Naive thymus-derived CD4-positive, alpha-beta T cell (primary cell): ENCODE measurements at regions of chr9 and their contacts with region 1.

Region 1: GRCh38 chr9:120842690-120843499 is at the start of gene PSMD5:
- DNase-seq: peak; percentile 86 to 98 (median 95)
- ATAC-seq: peak; percentile 94
- H3K4me3 ChIP-seq: peak within 1 kb of the TSS; percentile 89
- H3K4me3 Mint-ChIP-seq: peak within 1 kb of the TSS; percentile 91 to 99 (median 96)
- H3K27ac ChIP-seq: peak within 1 kb of the TSS; percentile 98
- H3K27ac Mint-ChIP-seq: peak within 1 kb of the TSS; percentile 83 to 99 (median 96)
- H3K4me1 ChIP-seq: peaks cover 34 to 50% of the 10 kb centered on the region in 2 donors
- H3K4me1 Mint-ChIP-seq: peaks cover 53 to 86% (median 79%) of the 10 kb centered on the region in 7 donors
- H3K27me3 ChIP-seq: no peaks in the 10 kb centered on the region
- H3K27me3 Mint-ChIP-seq: no peaks in the 10 kb centered on the region
- total RNA-seq, gene PSMD5: 33.5 to 63.9 (median 44.0) TPM

Region 2: GRCh38 chr9:120579750-120580590 is 262.9 kb before region 1 on chr9 and contains the start of gene CDK5RAP2:
- CTCF ChIA-PET with region 1: no interaction called
- POLR2A ChIA-PET with region 1: no interaction called
- intact Hi-C with region 1: loop called in 1 of 2 experiments (anchors 1 kb)
- DNase-seq: peak; percentile 77 to 94 (median 92)
- ATAC-seq: peak; percentile 99
- H3K4me3 ChIP-seq: peak within 1 kb of the TSS; percentile 85
- H3K4me3 Mint-ChIP-seq: peak within 1 kb of the TSS; percentile 86 to 98 (median 94)
- H3K27ac ChIP-seq: peak within 1 kb of the TSS; percentile 81
- H3K27ac Mint-ChIP-seq: peak within 1 kb of the TSS; percentile 88 to 95 (median 91)
- H3K4me1 ChIP-seq: peaks cover 15 to 17% of the 10 kb centered on the region in 2 donors
- H3K4me1 Mint-ChIP-seq: peaks cover 29 to 68% (median 62%) of the 10 kb centered on the region in 7 donors
- H3K27me3 ChIP-seq: no peaks in the 10 kb centered on the region
- H3K27me3 Mint-ChIP-seq: peaks cover 0 to 3% (median 0%) of the 10 kb centered on the region in 5 donors
- total RNA-seq, gene CDK5RAP2: 62.2 to 98.1 (median 78.1) TPM

Region 3: DNA sequence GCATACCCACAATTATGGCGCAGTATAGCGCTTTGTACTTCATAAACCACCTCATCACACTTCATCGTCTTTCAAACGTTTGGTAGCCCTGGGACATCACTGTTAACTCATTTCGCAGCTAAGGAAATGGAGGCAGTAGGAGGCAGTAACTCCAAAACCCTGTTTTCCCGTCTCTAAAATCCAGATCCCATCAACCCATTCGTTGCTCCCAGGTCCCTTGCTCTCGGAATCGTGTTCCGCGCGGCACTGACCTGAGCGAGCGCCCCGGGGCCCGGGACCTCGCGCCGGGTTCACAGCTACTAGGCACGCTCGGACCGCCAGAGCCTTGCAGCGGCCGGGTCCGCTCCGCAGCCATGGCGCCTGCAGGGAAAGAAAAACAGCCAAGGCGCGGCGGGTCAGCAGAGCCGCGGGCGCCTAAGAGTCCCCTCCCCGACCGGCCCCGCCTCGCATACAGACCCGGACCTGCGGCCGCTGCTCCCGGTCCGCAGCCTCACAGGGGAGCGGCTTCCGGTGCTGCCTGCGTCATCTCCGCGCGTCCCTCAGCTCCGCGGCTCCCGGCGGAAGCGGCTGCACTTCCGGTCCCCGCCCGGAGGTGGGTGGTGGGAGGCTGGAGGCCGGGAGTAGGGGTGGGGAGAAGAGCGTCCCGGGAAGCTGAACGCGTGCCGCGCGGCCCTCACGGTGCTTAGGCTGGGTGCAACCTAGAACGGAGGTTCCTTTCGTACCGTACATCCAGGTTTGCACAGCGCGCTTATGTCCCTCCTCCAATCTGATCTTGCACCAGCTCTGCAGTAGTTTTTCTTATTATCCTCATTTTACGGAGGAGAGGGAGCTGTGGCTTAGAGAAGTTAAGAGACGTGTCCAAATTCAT is 49.8 kb before region 1 on chr9 and contains the start of gene FBXW2:
- CTCF ChIA-PET with region 1: no interaction called
- POLR2A ChIA-PET with region 1: interaction called, 15 read pairs
- intact Hi-C with region 1: loop called (anchors 1 kb)
- DNase-seq: peak; percentile 65 to 96 (median 78)
- ATAC-seq: peak; percentile 91
- H3K4me3 ChIP-seq: peak within 1 kb of the TSS; percentile 66
- H3K4me3 Mint-ChIP-seq: peak within 1 kb of the TSS; percentile 91 to 98 (median 96)
- H3K27ac ChIP-seq: peak within 1 kb of the TSS; percentile 92
- H3K27ac Mint-ChIP-seq: peak within 1 kb of the TSS; percentile 88 to 98 (median 95)
- H3K4me1 ChIP-seq: peaks cover 28 to 34% of the 10 kb centered on the region in 2 donors
- H3K4me1 Mint-ChIP-seq: peaks cover 34 to 65% (median 58%) of the 10 kb centered on the region in 7 donors
- H3K27me3 ChIP-seq: no peaks in the 10 kb centered on the region
- H3K27me3 Mint-ChIP-seq: no peaks in the 10 kb centered on the region
- total RNA-seq, gene FBXW2: 72.5 to 90.3 (median 77.9) TPM

Region 4: GRCh38 chr9:120815075-120815474 is 27.8 kb before region 1 on chr9:
- CTCF ChIA-PET with region 1: no interaction called
- POLR2A ChIA-PET with region 1: no interaction called
- intact Hi-C with region 1: no loop called
- DNase-seq: no peak
- ATAC-seq: no peak
- H3K4me3 ChIP-seq: no peak overlapping the region
- H3K4me3 Mint-ChIP-seq: no peak overlapping the region
- H3K27ac ChIP-seq: no peak overlapping the region
- H3K27ac Mint-ChIP-seq: no peak overlapping the region
- H3K4me1 ChIP-seq: no peaks in the 10 kb centered on the region
- H3K4me1 Mint-ChIP-seq: no peaks in the 10 kb centered on the region
- H3K27me3 ChIP-seq: no peaks in the 10 kb centered on the region
- H3K27me3 Mint-ChIP-seq: no peaks in the 10 kb centered on the region

Region 5: DNA sequence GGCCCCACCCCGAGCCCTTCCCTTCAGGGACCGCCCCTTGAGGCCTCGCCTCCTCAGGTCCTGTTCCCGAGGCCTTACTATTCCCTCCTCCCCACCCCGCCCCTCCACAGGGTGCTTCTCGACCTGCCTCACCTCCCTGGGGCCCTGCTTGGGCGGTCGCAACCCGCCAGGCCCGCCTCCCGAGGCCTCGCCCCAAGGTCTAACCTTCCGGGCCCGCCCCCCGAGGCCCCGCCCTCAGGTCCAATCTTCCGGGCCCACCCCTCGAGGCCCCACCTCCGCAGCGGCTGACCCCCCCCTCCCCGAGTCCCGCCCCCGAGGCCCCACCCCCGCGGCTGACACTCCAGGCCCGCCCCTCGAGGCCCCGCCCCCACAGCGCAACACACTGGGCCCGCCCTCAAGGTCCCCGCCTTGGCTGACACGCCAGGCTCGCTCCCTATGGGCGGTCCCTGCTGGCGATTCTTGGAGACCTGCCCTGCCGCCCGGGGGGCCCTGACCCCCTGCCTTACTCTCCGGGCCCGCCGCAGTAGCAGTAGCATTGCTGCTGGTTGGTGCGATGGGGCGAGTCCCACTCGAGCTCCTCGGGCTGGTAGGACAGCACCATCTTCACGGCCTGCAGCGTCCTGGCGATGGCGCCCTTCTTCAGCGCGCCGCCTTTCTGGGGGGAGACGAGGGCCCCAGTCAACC is 25.9 kb after region 1 on chr9:
- CTCF ChIA-PET with region 1: interaction called, 9 read pairs
- POLR2A ChIA-PET with region 1: interaction called, 72 read pairs
- intact Hi-C with region 1: loop called (anchors 1 kb)
- DNase-seq: peak; percentile 92 to 97 (median 95)
- ATAC-seq: peak; percentile 91
- H3K4me3 ChIP-seq: peak overlapping the region; percentile 78
- H3K4me3 Mint-ChIP-seq: peak overlapping the region; percentile 49 to 95 (median 91)
- H3K27ac ChIP-seq: peak overlapping the region; percentile 77
- H3K27ac Mint-ChIP-seq: peak overlapping the region; percentile 79 to 97 (median 94)
- H3K4me1 ChIP-seq: peaks cover 7 to 10% of the 10 kb centered on the region in 2 donors
- H3K4me1 Mint-ChIP-seq: peaks cover 13 to 49% (median 24%) of the 10 kb centered on the region in 7 donors
- H3K27me3 ChIP-seq: no peaks in the 10 kb centered on the region
- H3K27me3 Mint-ChIP-seq: no peaks in the 10 kb centered on the region

Region 6: DNA sequence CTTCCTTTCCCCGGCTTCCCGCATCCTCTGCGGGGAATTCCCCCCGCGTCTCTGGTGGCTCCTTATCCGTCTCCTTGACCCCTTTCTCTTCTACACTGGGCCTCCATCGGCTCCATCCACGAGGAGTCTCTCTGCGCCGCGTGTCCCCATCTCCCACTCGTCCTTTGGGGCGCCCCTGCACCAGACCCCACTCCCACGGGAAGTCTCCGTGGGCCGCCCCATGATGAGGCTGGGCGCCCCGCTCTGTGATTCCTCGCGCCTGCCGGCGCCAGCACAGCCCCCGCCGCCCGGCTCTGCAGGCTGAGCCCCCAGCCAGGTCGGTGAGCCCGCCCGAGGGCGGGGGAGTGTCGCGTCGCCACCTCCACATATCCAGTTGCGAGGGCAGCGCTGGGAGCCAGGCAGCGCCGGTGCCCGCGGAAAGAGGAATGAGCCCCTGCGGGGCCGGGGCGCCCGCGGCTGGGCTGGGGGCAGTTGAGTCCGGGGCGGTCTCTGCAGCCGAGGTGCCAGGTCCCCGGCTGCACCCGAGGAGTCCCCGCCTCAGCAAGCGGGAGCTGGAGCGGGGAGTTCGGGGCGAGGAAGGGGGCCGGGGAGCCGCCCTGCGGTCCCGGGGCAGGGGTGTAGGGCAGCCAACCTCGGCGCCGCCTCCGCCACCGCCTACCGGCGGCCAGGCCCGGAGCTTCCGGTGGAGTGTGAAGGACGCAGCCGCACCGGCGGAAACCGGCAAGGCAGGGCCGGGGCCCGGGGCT is 85.8 kb after region 1 on chr9:
- CTCF ChIA-PET with region 1: interaction called, 6 read pairs
- POLR2A ChIA-PET with region 1: interaction called, 34 read pairs
- intact Hi-C with region 1: loop called in 1 of 2 experiments (anchors 1 kb)
- DNase-seq: peak; percentile 63 to 86 (median 74)
- ATAC-seq: peak; percentile 58
- H3K4me3 ChIP-seq: peak overlapping the region; percentile 79
- H3K4me3 Mint-ChIP-seq: peak overlapping the region; percentile 90 to 100 (median 96)
- H3K27ac ChIP-seq: peak overlapping the region; percentile 97
- H3K27ac Mint-ChIP-seq: peak overlapping the region; percentile 95 to 100 (median 99)
- H3K4me1 ChIP-seq: peaks cover 62 to 84% of the 10 kb centered on the region in 2 donors
- H3K4me1 Mint-ChIP-seq: peaks cover 57 to 95% (median 86%) of the 10 kb centered on the region in 7 donors
- H3K27me3 ChIP-seq: no peaks in the 10 kb centered on the region
- H3K27me3 Mint-ChIP-seq: no peaks in the 10 kb centered on the region

Region 7: GRCh38 chr9:120998111-120998510 is 155.2 kb after region 1 on chr9:
- CTCF ChIA-PET with region 1: no interaction called
- POLR2A ChIA-PET with region 1: no interaction called
- intact Hi-C with region 1: no loop called
- DNase-seq: no peak
- ATAC-seq: no peak
- H3K4me3 ChIP-seq: no peak overlapping the region
- H3K4me3 Mint-ChIP-seq: no peak overlapping the region
- H3K27ac ChIP-seq: no peak overlapping the region
- H3K27ac Mint-ChIP-seq: no peak overlapping the region
- H3K4me1 ChIP-seq: no peaks in the 10 kb centered on the region
- H3K4me1 Mint-ChIP-seq: no peaks in the 10 kb centered on the region
- H3K27me3 ChIP-seq: no peaks in the 10 kb centered on the region
- H3K27me3 Mint-ChIP-seq: peaks cover 0 to 6% (median 0%) of the 10 kb centered on the region in 5 donors

Region 8: GRCh38 chr9:121059998-121060636 is 217.2 kb after region 1 on chr9:
- CTCF ChIA-PET with region 1: interaction called, 4 read pairs
- POLR2A ChIA-PET with region 1: interaction called, 5 read pairs
- intact Hi-C with region 1: loop called in 1 of 2 experiments (anchors 1 kb)
- DNase-seq: peak in 7 of 9 donors; percentile 16 to 59 (median 53)
- ATAC-seq: peak; percentile 67
- H3K4me3 ChIP-seq: no peak overlapping the region
- H3K4me3 Mint-ChIP-seq: no peak overlapping the region
- H3K27ac ChIP-seq: no peak overlapping the region
- H3K27ac Mint-ChIP-seq: no peak overlapping the region
- H3K4me1 ChIP-seq: peaks cover 0 to 5% of the 10 kb centered on the region in 2 donors
- H3K4me1 Mint-ChIP-seq: peaks cover 10 to 27% (median 15%) of the 10 kb centered on the region in 7 donors
- H3K27me3 ChIP-seq: no peaks in the 10 kb centered on the region
- H3K27me3 Mint-ChIP-seq: peaks cover 0 to 5% (median 0%) of the 10 kb centered on the region in 5 donors

Region 9: GRCh38 chr9:121179930-121180681 is 337.2 kb after region 1 on chr9:
- CTCF ChIA-PET with region 1: no interaction called
- POLR2A ChIA-PET with region 1: no interaction called
- intact Hi-C with region 1: no loop called
- DNase-seq: no peak
- ATAC-seq: no peak
- H3K4me3 ChIP-seq: no peak overlapping the region
- H3K4me3 Mint-ChIP-seq: no peak overlapping the region
- H3K27ac ChIP-seq: peak overlapping the region; percentile 10
- H3K27ac Mint-ChIP-seq: peak overlapping the region; percentile 2 to 74 (median 53)
- H3K4me1 ChIP-seq: peaks cover under 1 to 4% of the 10 kb centered on the region in 2 donors
- H3K4me1 Mint-ChIP-seq: peaks cover 4 to 37% (median 28%) of the 10 kb centered on the region in 7 donors
- H3K27me3 ChIP-seq: no peaks in the 10 kb centered on the region
- H3K27me3 Mint-ChIP-seq: no peaks in the 10 kb centered on the region

Region 10: GRCh38 chr9:121201738-121202533 is 359.0 kb after region 1 on chr9 and contains the start of gene RAB14:
- CTCF ChIA-PET with region 1: interaction called, 3 read pairs
- POLR2A ChIA-PET with region 1: interaction called, 8 read pairs
- intact Hi-C with region 1: loop called in 1 of 2 experiments (anchors 5 kb)
- DNase-seq: peak; percentile 99 to 100 (median 100)
- ATAC-seq: peak; percentile 95
- H3K4me3 ChIP-seq: peak within 1 kb of the TSS; percentile 71
- H3K4me3 Mint-ChIP-seq: peak within 1 kb of the TSS; percentile 79 to 100 (median 94)
- H3K27ac ChIP-seq: peak within 1 kb of the TSS; percentile 92
- H3K27ac Mint-ChIP-seq: peak within 1 kb of the TSS; percentile 88 to 98 (median 95)
- H3K4me1 ChIP-seq: peaks cover 24 to 34% of the 10 kb centered on the region in 2 donors
- H3K4me1 Mint-ChIP-seq: peaks cover 33 to 62% (median 50%) of the 10 kb centered on the region in 7 donors
- H3K27me3 ChIP-seq: no peaks in the 10 kb centered on the region
- H3K27me3 Mint-ChIP-seq: peaks cover 0 to 3% (median 0%) of the 10 kb centered on the region in 5 donors
- total RNA-seq, gene RAB14: 43.9 to 66.5 (median 60.7) TPM